Activated CD4-positive, alpha-beta T cell treated with anti-CD3 and anti-CD28 coated beads for 36 hours (primary cell): ENCODE measurements at regions of chr11 and their contacts with region 1.

Region 1: DNA sequence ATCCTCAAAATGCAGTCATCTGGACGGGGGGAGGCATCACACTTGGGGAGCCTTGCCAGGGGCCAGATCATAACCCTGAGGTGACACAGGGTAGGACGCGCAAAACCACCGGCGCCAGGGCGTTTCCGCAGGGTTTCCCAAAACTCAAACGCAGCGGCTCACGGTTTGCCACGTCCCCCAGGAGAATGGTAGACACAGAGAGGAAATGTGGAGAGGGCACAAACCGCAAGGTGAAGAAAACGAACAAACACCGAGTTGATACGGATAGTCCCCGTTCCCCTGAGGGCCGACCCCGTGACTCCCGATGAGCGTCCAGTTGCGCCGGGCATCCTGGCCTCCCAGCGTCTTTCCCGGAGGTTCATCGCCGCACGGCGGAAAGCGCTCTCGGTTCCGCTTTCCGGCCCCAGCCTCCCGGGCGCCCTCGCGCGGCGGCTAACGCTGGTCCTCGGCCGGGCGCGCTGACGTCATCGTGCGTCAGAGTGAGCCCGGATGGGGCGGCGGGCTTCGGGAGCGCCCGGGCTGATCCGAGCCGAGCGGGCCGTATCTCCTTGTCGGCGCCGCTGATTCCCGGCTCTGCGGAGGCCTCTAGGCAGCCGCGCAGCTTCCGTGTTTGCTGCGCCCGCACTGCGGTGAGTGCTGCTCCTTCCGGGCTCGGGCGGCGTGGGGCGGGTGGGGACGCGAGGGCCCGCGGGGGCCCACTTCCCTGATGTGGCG is at the start of gene BIRC2:
- DNase-seq: peak; percentile 98
- ATAC-seq: peak; percentile 89
- H3K4me3 Mint-ChIP-seq: peak within 1 kb of the TSS; percentile 94
- H3K27ac Mint-ChIP-seq: peak within 1 kb of the TSS; percentile 99
- H3K4me1 Mint-ChIP-seq: peaks cover 40% of the 10 kb centered on the region
- H3K27me3 Mint-ChIP-seq: no peaks in the 10 kb centered on the region
- total RNA-seq, gene BIRC2: 33.0 to 48.8 TPM

Region 2: GRCh38 chr11:100961633-100962032 is 1385.3 kb before region 1 on chr11:
- CTCF ChIA-PET with region 1: no interaction called
- POLR2A ChIA-PET with region 1: no interaction called
- intact Hi-C with region 1: no loop called
- DNase-seq: no peak
- ATAC-seq: no peak
- H3K4me3 Mint-ChIP-seq: no peak overlapping the region
- H3K27ac Mint-ChIP-seq: no peak overlapping the region
- H3K4me1 Mint-ChIP-seq: no peaks in the 10 kb centered on the region
- H3K27me3 Mint-ChIP-seq: no peaks in the 10 kb centered on the region

Region 3: GRCh38 chr11:101914738-101915426 is 432.0 kb before region 1 on chr11 and contains the start of gene CEP126:
- CTCF ChIA-PET with region 1: no interaction called
- POLR2A ChIA-PET with region 1: no interaction called
- intact Hi-C with region 1: loop called in 1 of 2 experiments (anchors 2 kb)
- DNase-seq: peak; percentile 96
- ATAC-seq: peak; percentile 96
- H3K4me3 Mint-ChIP-seq: peak within 1 kb of the TSS; percentile 86
- H3K27ac Mint-ChIP-seq: peak within 1 kb of the TSS; percentile 86
- H3K4me1 Mint-ChIP-seq: peaks cover 16% of the 10 kb centered on the region
- H3K27me3 Mint-ChIP-seq: peaks cover 2% of the 10 kb centered on the region
- total RNA-seq, gene CEP126: 1.3 to 2.0 TPM

Region 4: DNA sequence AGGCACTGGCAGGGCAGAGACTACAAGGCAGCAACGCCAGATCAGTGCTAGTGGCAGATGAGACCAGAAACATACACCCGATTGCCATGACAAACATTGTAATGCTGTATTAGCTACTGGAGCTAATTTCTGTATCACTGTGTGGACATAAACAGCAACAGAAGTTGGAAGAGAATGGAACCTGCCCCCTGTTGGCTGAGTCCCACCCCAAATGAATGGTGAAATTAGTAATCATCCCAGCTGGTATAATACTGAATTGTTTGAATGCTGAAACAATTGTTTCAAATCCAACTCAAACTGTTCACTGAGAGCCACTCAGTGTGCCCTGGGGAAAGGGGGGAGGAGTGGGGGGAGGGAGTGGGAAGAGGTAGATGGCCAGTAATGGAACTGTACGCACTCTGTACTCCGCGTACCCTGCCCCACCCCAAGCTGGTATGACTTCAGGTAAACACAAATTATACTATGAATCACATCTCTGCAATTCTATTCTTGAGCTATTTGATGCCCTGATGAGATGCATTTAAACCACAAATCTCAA is 40.8 kb before region 1 on chr11:
- CTCF ChIA-PET with region 1: interaction called, 11 read pairs
- POLR2A ChIA-PET with region 1: no interaction called
- intact Hi-C with region 1: loop called in 1 of 2 experiments (anchors 5 kb)
- DNase-seq: no peak
- ATAC-seq: peak; percentile 48
- H3K4me3 Mint-ChIP-seq: peak overlapping the region; percentile 54
- H3K27ac Mint-ChIP-seq: peak overlapping the region; percentile 86
- H3K4me1 Mint-ChIP-seq: peaks cover 55% of the 10 kb centered on the region
- H3K27me3 Mint-ChIP-seq: no peaks in the 10 kb centered on the region

Region 5: DNA sequence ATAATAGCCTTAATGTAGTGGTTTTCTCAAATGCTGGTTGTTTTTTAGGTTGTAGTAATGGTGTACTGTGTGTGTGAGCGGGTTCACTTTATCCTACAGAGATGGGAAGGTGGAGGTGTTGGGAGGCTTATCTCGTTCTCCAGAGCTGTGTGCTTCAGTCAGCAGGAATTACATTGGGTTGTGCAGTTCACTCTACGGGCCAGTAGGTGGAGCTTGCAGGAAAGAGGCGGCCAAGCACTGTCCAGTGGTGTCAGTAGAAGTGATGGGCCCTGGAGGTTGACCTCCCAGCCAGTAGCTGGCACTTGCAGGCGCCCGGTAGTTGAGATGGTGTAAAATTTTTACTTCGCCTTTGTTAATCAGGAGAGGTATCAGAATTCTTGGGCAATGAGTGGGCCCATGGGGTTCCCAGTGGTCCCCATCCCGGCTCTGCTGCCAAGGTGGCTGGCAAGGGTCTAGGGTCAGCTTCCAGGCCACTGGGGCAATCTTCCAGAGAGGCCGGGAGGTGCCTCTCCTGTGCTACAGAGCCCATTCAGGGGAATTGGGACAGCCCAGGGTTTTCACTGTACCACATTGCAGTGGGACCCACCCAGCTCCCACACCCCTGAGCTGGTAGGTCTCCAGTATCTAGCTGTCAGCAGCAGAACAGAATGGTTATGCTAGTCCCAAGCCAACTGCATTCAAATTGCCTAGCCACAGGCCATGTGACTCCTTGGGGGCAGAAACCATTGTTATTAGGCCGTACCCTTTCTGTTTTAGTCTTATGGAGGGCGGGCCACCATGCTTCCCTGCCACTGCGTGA is 44.0 kb after region 1 on chr11:
- CTCF ChIA-PET with region 1: interaction called, 20 read pairs
- POLR2A ChIA-PET with region 1: no interaction called
- intact Hi-C with region 1: no loop called
- DNase-seq: peak; percentile 68
- ATAC-seq: peak; percentile 78
- H3K4me3 Mint-ChIP-seq: no peak overlapping the region
- H3K27ac Mint-ChIP-seq: peak overlapping the region; percentile 44
- H3K4me1 Mint-ChIP-seq: peaks cover 41% of the 10 kb centered on the region
- H3K27me3 Mint-ChIP-seq: no peaks in the 10 kb centered on the region

Region 6: GRCh38 chr11:102469172-102469821 is 122.4 kb after region 1 on chr11:
- CTCF ChIA-PET with region 1: no interaction called
- POLR2A ChIA-PET with region 1: interaction called, 10 read pairs
- intact Hi-C with region 1: no loop called
- DNase-seq: no peak
- ATAC-seq: no peak
- H3K4me3 Mint-ChIP-seq: no peak overlapping the region
- H3K27ac Mint-ChIP-seq: peak overlapping the region; percentile 21
- H3K4me1 Mint-ChIP-seq: peaks cover 95% of the 10 kb centered on the region
- H3K27me3 Mint-ChIP-seq: no peaks in the 10 kb centered on the region

Region 7: GRCh38 chr11:102599642-102600261 is 252.8 kb after region 1 on chr11:
- CTCF ChIA-PET with region 1: interaction called, 8 read pairs
- POLR2A ChIA-PET with region 1: no interaction called
- intact Hi-C with region 1: loop called in 1 of 2 experiments (anchors 1 kb)
- DNase-seq: no peak
- ATAC-seq: peak; percentile 96
- H3K4me3 Mint-ChIP-seq: no peak overlapping the region
- H3K27ac Mint-ChIP-seq: peak overlapping the region; percentile 75
- H3K4me1 Mint-ChIP-seq: peaks cover 28% of the 10 kb centered on the region
- H3K27me3 Mint-ChIP-seq: no peaks in the 10 kb centered on the region